Dendritic cell treated with granulocyte-macrophage colony-stimulating factor and Interleukin-4, amounts not matched to agents 40 ng/mL and 50 ng/mL, for 4 days (primary cell): ENCODE measurements at regions of chr17 and their contacts with region 1.

Region 1: DNA sequence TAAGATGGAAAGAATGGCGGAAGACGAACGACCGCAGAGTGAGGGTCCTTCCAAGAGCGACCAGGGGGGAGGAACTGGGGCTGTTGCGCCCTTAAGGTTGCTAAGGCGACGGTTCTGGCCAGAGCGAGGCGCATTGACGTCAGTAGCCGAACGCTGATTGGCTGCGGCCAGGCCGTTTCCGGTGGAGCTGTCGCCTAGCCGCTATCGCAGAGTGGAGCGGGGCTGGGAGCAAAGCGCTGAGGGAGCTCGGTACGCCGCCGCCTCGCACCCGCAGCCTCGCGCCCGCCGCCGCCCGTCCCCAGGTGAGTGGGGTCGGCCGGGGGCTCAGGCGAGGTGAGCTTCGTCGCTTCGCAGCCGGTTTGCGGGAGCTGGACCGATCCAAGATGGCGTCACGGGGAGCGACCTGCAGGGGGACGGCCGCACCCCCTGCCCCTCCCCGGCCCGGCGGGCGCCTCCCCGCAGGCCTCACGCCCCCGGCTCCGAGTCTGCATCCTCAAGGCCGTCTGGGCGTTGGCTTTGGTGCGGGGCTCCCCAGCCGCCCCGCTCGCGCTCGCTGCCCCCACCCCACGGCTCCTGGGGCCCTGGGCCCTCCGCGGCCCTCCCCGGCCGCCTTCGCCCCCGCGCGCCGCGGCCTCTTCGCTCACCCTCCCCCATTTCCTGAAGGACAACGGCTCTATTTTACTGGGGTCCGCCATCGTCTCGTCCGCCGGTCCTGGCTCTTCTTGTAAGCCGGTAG is at the start of gene PRKAR1A:
- H3K4me3 Mint-ChIP-seq: peak within 1 kb of the TSS; percentile 97
- H3K27ac Mint-ChIP-seq: peak within 1 kb of the TSS; percentile 100
- H3K4me1 Mint-ChIP-seq: peaks cover 71% of the 10 kb centered on the region
- H3K27me3 Mint-ChIP-seq: no peaks in the 10 kb centered on the region

Region 2: DNA sequence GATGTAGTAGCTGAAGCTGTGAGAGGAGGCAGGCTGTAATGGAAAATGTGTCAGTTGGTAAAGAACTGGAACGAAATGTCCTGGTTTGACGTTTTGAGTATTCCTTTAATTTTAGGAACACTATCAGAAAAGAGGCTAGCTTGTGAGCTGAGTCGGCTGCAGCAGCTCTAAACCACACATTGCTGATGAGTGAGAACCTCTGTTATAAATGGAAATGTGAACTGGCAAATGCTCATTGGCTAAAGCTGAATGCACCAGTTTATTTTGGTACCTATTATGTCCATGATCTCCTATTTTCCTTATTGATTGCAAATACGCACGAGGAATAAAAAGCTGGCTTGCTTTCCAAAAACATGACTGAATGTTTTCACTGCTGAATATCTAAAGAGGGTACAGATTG is 44.1 kb before region 1 on chr17:
- intact Hi-C with region 1: loop called (anchors 5 kb)
- H3K4me3 Mint-ChIP-seq: no peak overlapping the region
- H3K27ac Mint-ChIP-seq: no peak overlapping the region
- H3K4me1 Mint-ChIP-seq: peaks cover 13% of the 10 kb centered on the region
- H3K27me3 Mint-ChIP-seq: peaks cover 6% of the 10 kb centered on the region

Region 3: GRCh38 chr17:68491381-68492231 is 20.8 kb before region 1 on chr17:
- intact Hi-C with region 1: loop called (anchors 2 kb)
- H3K4me3 Mint-ChIP-seq: peak overlapping the region; percentile 51
- H3K27ac Mint-ChIP-seq: peak overlapping the region; percentile 95
- H3K4me1 Mint-ChIP-seq: peaks cover 78% of the 10 kb centered on the region
- H3K27me3 Mint-ChIP-seq: no peaks in the 10 kb centered on the region

Region 4: GRCh38 chr17:68497885-68498319 is 14.5 kb before region 1 on chr17:
- intact Hi-C with region 1: loop called (anchors 2 kb)
- H3K4me3 Mint-ChIP-seq: peak overlapping the region; percentile 69
- H3K27ac Mint-ChIP-seq: peak overlapping the region; percentile 94
- H3K4me1 Mint-ChIP-seq: peaks cover 75% of the 10 kb centered on the region
- H3K27me3 Mint-ChIP-seq: no peaks in the 10 kb centered on the region

Region 5: GRCh38 chr17:68627956-68628575 is 115.7 kb after region 1 on chr17:
- intact Hi-C with region 1: no loop called
- H3K4me3 Mint-ChIP-seq: no peak overlapping the region
- H3K27ac Mint-ChIP-seq: no peak overlapping the region
- H3K4me1 Mint-ChIP-seq: peaks cover 11% of the 10 kb centered on the region
- H3K27me3 Mint-ChIP-seq: peaks cover 3% of the 10 kb centered on the region